ENCODE measurements at regions of chr21 and their contacts with region 1.

Region 1: GRCh38 chr21:20040768-20041167 is 957.4 kb upstream of the NCAM2 start:
- DNase-seq: no peak
- H3K4me3 ChIP-seq: no peak overlapping the region
- H3K27ac ChIP-seq: no peak overlapping the region
- H3K4me1 ChIP-seq: peaks cover 0 to 2% (median 0%) of the 10 kb centered on the region in 4 experiments; a peak in 1 of 7 replicates
- H3K27me3 ChIP-seq: no peaks in the 10 kb centered on the region
- CTCF ChIP-seq: peak in 2 of 3 experiments; percentile 22 to 39; a peak in 2 of 4 replicates
- EP300 ChIP-seq: no peak
- POLR2A ChIP-seq: no peak
- RAD21 ChIP-seq: peak; percentile 47 to 55

Region 2: GRCh38 chr21:19830446-19830845 is 210.3 kb before region 1 on chr21:
- CTCF ChIA-PET with region 1: no interaction called
- POLR2A ChIA-PET with region 1: no interaction called
- DNase-seq: no peak
- H3K4me3 ChIP-seq: no peak overlapping the region
- H3K27ac ChIP-seq: no peak overlapping the region
- H3K4me1 ChIP-seq: no peaks in the 10 kb centered on the region
- H3K27me3 ChIP-seq: no peaks in the 10 kb centered on the region
- CTCF ChIP-seq: no peak
- EP300 ChIP-seq: no peak
- POLR2A ChIP-seq: no peak
- RAD21 ChIP-seq: no peak

Region 3: DNA sequence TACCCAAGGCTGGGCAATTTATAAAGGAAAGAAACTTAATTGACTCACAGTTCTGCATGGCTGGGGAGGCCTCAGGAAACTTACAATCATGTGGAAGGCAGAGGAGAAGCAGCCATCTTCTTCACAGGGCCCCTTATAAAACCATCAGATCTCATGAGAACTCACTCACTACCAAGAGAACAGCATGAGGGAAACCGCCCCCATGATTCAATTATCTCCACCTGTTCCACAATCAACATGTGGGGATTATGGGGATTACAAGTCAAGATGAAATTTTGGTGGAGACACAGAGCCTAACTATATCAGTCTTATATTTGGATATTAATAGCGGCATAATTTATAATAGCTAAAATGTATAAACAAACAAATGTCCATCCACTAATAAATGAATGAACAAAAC is 166.2 kb before region 1 on chr21:
- CTCF ChIA-PET with region 1: no interaction called
- POLR2A ChIA-PET with region 1: no interaction called
- DNase-seq: no peak
- H3K4me3 ChIP-seq: no peak overlapping the region
- H3K27ac ChIP-seq: no peak overlapping the region
- H3K4me1 ChIP-seq: no peaks in the 10 kb centered on the region
- H3K27me3 ChIP-seq: no peaks in the 10 kb centered on the region
- CTCF ChIP-seq: no peak
- EP300 ChIP-seq: no peak
- POLR2A ChIP-seq: no peak
- RAD21 ChIP-seq: no peak

Region 4: GRCh38 chr21:20030390-20030789 is 10.4 kb before region 1 on chr21:
- CTCF ChIA-PET with region 1: interaction called, 14 read pairs
- POLR2A ChIA-PET with region 1: no interaction called
- DNase-seq: no peak
- H3K4me3 ChIP-seq: no peak overlapping the region
- H3K27ac ChIP-seq: no peak overlapping the region
- H3K4me1 ChIP-seq: no peaks in the 10 kb centered on the region
- H3K27me3 ChIP-seq: no peaks in the 10 kb centered on the region
- CTCF ChIP-seq: no peak
- EP300 ChIP-seq: no peak
- POLR2A ChIP-seq: no peak
- RAD21 ChIP-seq: no peak